ENCODE measurements at regions of chr2 and their contacts with region 1.

Region 1: GRCh38 chr2:24382363-24383073 is 22.2 kb upstream of the ITSN2 start:
- DNase-seq: no peak
- H3K4me3 ChIP-seq: no peak overlapping the region
- H3K27ac ChIP-seq: no peak overlapping the region
- H3K4me1 ChIP-seq: peaks cover 0 to 7% (median 0%) of the 10 kb centered on the region in 3 donors
- H3K27me3 ChIP-seq: no peaks in the 10 kb centered on the region
- CTCF ChIP-seq: peak; percentile 42 to 88 (median 54)
- POLR2A ChIP-seq: no peak

Region 2: DNA sequence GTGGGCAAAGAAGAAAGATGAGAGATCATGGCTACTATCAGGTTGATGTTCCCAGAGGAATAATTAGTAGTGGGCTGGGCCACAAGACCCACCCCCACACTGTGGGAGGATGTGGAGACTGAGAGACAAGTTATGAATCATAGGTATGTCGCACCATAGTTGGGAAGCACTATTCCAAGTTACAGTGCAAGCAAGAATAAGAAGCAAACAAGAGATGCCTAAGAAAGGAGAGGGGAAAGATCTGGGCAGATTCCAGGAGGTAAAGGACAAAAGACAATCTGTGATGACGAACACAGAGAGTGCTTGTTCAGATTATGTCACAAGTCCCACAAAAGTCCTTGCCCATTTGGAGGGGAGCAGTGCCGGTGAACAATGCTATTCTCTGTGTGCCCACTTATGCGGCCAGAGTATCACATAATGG is 151.0 kb before region 1 on chr2:
- intact Hi-C with region 1: loop called (anchors 10 kb)
- DNase-seq: no peak
- H3K4me3 ChIP-seq: no peak overlapping the region
- H3K27ac ChIP-seq: no peak overlapping the region
- H3K4me1 ChIP-seq: no peaks in the 10 kb centered on the region
- H3K27me3 ChIP-seq: no peaks in the 10 kb centered on the region
- CTCF ChIP-seq: no peak
- POLR2A ChIP-seq: no peak

Measured in esophagus squamous epithelium (tissue), 5 donors.